CD14-positive monocyte (primary cell): ENCODE measurements at regions of chr12 and their contacts with region 1.

Region 1: DNA sequence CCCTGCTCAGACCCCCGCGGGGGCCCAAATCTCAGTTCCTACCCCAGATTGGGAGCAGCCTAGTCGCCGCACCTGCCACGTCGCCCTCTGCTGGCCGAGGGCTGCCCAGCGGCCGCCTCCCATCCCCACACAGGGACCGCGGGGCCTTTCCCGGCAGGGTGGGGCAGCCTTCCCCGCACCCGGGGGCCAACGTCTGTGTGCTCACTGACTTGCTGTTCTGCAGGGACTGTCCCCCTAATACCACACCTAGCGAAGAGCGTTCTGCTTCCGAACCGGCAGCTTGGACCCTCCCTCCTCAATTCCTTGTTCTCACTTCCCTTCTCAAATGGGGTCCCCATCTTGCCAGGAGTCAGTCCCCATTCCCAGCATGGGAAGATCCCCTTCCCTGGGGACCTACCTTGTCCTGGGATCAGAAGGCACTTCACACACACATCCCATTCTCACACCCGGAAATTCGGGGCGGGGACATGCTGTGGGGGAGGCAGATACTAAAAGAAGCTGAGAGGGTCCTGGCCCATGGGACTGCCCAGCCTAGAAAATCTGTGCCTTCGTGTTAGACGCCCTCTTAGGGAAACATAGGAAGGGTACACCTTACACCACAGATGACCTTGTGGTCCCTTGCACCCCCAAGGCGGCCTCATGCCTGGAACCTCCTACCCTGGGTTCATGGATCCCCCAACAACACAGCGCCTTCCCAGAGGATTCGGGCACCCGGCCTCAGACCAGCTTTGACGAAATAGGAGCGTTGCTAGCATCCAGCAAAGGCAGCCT is 16.4 kb downstream of the ACVRL1 start:
- DNase-seq: peak; percentile 34 to 69 (median 42)
- H3K4me3 ChIP-seq: peak overlapping the region in 1 of 3 experiments; percentile 60
- H3K4me3 Mint-ChIP-seq: peak overlapping the region; percentile 59 to 83
- H3K27ac ChIP-seq: peak overlapping the region; percentile 89 to 92
- H3K27ac Mint-ChIP-seq: peak overlapping the region; percentile 93 to 98 (median 96)
- H3K4me1 ChIP-seq: peaks cover 21 to 25% of the 10 kb centered on the region in 2 donors
- H3K4me1 Mint-ChIP-seq: peaks cover 38% of the 10 kb centered on the region
- H3K27me3 ChIP-seq: no peaks in the 10 kb centered on the region
- H3K27me3 Mint-ChIP-seq: peaks cover 2 to 6% (median 3%) of the 10 kb centered on the region in 3 donors
- CTCF ChIP-seq: peak; percentile 91

Region 2: GRCh38 chr12:51631591-51631990 is 292.1 kb before region 1 on chr12:
- intact Hi-C with region 1: no loop called
- DNase-seq: no peak
- H3K4me3 ChIP-seq: no peak overlapping the region
- H3K4me3 Mint-ChIP-seq: no peak overlapping the region
- H3K27ac ChIP-seq: no peak overlapping the region
- H3K27ac Mint-ChIP-seq: no peak overlapping the region
- H3K4me1 ChIP-seq: no peaks in the 10 kb centered on the region
- H3K4me1 Mint-ChIP-seq: no peaks in the 10 kb centered on the region
- H3K27me3 ChIP-seq: no peaks in the 10 kb centered on the region
- H3K27me3 Mint-ChIP-seq: peaks cover 1 to 4% (median 1%) of the 10 kb centered on the region in 3 donors
- CTCF ChIP-seq: no peak

Region 3: DNA sequence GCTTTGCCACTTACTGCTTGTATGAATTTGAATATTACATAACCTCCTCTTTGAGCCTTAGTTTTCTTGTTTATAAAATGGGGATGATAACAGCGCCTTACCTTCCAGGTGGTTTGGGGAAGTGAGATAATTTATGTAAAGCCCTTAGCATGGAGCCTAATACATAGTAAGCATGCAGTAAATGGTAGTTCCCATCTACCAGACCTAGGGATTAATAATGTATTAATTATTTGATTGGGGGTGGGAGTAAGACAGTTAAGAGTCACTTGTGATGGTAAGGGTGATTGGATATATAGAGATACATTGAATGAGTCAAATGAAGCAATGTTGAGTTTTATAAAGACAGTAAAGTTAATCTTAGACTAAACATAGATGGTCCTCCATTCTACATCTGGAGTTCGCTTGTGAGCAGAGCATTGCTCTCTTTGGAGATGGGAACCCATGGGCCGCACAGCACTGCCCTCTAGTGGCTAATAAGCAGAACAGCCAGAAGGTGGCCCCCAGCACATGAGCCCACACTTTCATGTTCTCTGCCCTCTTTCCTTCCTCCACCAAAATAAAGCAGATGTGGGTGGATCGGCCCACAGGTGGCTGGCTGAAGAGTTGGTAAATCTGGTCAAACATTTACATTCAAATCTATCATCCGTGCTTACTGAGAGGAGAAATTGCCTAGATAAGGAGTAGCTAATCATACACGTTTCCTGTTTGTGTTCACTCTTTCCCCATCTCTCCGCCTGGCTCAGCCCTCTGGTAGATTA is 56.5 kb after region 1 on chr12:
- intact Hi-C with region 1: loop called in 1 of 2 experiments (anchors 5 kb)
- DNase-seq: peak; percentile 65 to 82 (median 76)
- H3K4me3 ChIP-seq: no peak overlapping the region
- H3K4me3 Mint-ChIP-seq: no peak overlapping the region
- H3K27ac ChIP-seq: peak overlapping the region in 1 of 2 donors; percentile 13
- H3K27ac Mint-ChIP-seq: peak overlapping the region; percentile 23 to 88 (median 73)
- H3K4me1 ChIP-seq: peaks cover 40 to 45% of the 10 kb centered on the region in 2 donors
- H3K4me1 Mint-ChIP-seq: peaks cover 48% of the 10 kb centered on the region
- H3K27me3 ChIP-seq: no peaks in the 10 kb centered on the region
- H3K27me3 Mint-ChIP-seq: no peaks in the 10 kb centered on the region
- CTCF ChIP-seq: peak; percentile 94